CD4-positive, alpha-beta T cell (primary cell): ENCODE measurements at regions of chr5 and their contacts with region 1.

Region 1: DNA sequence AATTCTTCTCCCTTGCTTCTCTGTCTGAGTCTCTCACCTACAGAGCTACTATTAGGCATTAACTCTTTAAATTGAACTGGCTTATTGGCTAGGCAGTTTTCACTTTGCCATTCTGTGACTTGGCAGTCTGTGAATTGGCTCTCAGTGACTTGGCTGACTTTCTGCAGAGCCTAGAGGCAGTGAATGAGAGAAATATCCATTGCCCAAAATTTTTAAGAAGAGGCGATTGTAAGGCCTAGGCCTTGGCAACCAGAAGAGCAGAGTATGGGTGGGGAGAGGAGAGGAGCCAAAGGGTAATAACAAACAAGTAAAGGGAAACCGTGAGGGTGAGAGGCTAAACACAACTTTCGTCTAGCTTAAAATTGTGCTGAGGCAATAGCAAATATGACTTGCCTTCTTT is 176.7 kb downstream of the PRR16 start:
- DNase-seq: no peak
- ATAC-seq: no peak
- H3K4me3 ChIP-seq: no peak overlapping the region
- H3K4me3 Mint-ChIP-seq: no peak overlapping the region
- H3K27ac ChIP-seq: no peak overlapping the region
- H3K27ac Mint-ChIP-seq: no peak overlapping the region
- H3K4me1 ChIP-seq: no peaks in the 10 kb centered on the region
- H3K4me1 Mint-ChIP-seq: no peaks in the 10 kb centered on the region
- H3K27me3 ChIP-seq: no peaks in the 10 kb centered on the region
- H3K27me3 Mint-ChIP-seq: no peaks in the 10 kb centered on the region
- CTCF ChIP-seq: no peak

Region 2: DNA sequence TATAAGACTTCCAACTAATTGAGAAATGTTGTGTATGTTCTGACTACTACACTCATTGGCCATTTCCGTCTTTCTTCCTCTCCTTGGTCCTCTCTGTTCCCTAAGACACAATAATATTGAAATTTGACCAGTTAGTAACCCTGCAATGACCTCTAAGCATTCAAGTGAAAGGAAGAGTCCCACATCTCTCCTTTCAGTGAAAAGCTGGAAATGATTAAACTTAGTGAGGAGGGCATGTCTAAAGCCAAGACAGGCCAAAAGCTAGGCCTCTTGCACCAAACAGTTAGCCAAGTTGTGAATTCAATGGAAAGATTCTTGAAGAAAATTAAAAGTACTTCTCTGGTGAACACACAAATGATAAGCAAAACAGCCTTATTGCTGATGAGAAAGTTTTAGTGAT is 54.1 kb before region 1 on chr5:
- CTCF ChIA-PET with region 1: no interaction called
- POLR2A ChIA-PET with region 1: no interaction called
- intact Hi-C with region 1: loop called in 1 of 2 experiments (anchors 2 kb)
- DNase-seq: no peak
- ATAC-seq: no peak
- H3K4me3 ChIP-seq: no peak overlapping the region
- H3K4me3 Mint-ChIP-seq: no peak overlapping the region
- H3K27ac ChIP-seq: no peak overlapping the region
- H3K27ac Mint-ChIP-seq: no peak overlapping the region
- H3K4me1 ChIP-seq: no peaks in the 10 kb centered on the region
- H3K4me1 Mint-ChIP-seq: no peaks in the 10 kb centered on the region
- H3K27me3 ChIP-seq: no peaks in the 10 kb centered on the region
- H3K27me3 Mint-ChIP-seq: no peaks in the 10 kb centered on the region
- CTCF ChIP-seq: no peak

Region 3: DNA sequence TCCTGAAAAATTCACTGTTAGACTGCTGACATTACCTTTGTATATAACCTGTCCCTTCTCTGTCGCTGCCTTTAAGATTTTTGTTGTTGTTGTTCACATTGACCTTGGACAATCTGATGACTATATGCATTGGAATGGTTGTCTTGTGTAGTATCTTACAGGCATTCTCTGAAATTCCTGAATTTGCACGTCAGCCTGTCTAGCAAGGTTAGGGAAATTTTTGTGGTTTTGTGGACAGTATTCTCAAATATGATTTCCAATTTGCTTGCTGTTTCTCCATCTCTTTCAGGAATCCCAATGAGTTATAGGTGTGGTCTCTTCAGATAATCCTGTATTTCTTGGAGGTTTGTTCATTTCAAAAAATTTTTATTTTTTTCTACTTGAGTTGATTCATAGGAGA is 35.9 kb before region 1 on chr5:
- CTCF ChIA-PET with region 1: no interaction called
- POLR2A ChIA-PET with region 1: no interaction called
- intact Hi-C with region 1: no loop called
- DNase-seq: no peak
- ATAC-seq: no peak
- H3K4me3 ChIP-seq: no peak overlapping the region
- H3K4me3 Mint-ChIP-seq: no peak overlapping the region
- H3K27ac ChIP-seq: no peak overlapping the region
- H3K27ac Mint-ChIP-seq: no peak overlapping the region
- H3K4me1 ChIP-seq: no peaks in the 10 kb centered on the region
- H3K4me1 Mint-ChIP-seq: no peaks in the 10 kb centered on the region
- H3K27me3 ChIP-seq: no peaks in the 10 kb centered on the region
- H3K27me3 Mint-ChIP-seq: no peaks in the 10 kb centered on the region
- CTCF ChIP-seq: no peak

Region 4: DNA sequence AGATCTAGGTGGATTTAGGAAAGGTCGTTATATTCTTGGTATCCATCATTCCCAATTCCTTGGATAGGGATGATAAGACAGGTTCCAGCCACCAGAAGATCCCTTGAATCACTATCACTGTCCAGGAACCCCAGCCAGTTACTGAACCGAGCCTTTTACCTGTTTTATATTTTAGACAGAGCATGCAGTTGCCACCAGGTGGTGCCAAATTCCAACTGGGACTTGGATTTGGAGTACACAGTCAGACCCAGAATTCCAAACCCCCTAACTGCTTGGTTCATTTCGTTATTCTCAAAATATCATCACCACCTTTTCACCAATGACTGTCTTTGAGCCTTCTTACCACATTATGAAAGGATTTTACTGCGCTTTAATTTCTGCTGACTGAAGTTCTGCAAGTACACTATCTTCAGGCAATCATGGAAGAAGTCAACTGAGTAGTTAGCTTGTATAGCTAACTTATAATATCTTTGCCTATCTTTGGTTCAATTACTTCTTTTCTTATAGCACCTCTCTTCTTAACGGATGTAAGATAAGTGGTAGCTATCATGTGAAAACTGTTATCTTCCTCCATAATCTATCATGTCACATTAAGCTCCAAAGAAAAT is 15.2 kb after region 1 on chr5:
- CTCF ChIA-PET with region 1: no interaction called
- POLR2A ChIA-PET with region 1: no interaction called
- intact Hi-C with region 1: no loop called
- DNase-seq: no peak
- ATAC-seq: no peak
- H3K4me3 ChIP-seq: no peak overlapping the region
- H3K4me3 Mint-ChIP-seq: no peak overlapping the region
- H3K27ac ChIP-seq: no peak overlapping the region
- H3K27ac Mint-ChIP-seq: no peak overlapping the region
- H3K4me1 ChIP-seq: no peaks in the 10 kb centered on the region
- H3K4me1 Mint-ChIP-seq: no peaks in the 10 kb centered on the region
- H3K27me3 ChIP-seq: no peaks in the 10 kb centered on the region
- H3K27me3 Mint-ChIP-seq: no peaks in the 10 kb centered on the region
- CTCF ChIP-seq: no peak